AG04449 (cell line): ENCODE measurements at regions of chr1 and their contacts with region 1.

Region 1: DNA sequence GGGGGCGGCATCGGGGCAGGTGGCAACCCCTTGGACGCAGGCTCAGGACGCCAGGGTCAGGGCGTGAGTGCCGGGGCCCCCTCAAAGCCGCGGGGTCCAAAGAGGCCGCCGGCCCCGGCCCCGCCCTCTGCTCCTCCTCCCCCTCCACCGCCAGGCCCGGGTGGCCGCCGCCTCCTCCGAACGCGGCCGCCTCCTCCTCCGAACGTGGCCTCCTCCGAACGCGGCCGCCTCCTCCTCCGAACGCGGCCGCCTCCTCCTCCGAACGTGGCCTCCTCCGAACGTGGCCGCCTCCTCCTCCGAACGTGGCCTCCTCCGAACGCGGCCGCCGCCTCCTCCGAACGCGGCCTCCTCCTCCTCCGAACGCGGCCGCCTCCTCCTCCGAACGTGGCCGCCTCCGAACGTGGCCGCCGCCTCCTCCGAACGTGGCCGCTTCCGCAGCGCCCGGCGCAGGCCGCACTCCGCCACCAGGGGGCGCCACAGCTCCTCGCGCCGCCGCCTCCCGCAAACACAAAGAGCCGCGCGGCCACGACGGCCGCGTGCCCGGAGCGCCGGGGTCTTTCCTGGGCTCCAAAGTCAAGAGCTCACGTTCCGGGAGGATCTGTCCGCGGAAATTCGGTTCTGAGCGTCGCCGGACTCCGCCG is 19.3 kb upstream of the SAMD11 start:
- DNase-seq: no peak
- H3K4me3 ChIP-seq: peak overlapping the region; percentile 57
- CTCF ChIP-seq: peak; percentile 84

Region 2: GRCh38 chr1:818618-819291 is 85.7 kb before region 1 on chr1:
- CTCF ChIA-PET with region 1: no interaction called
- POLR2A ChIA-PET with region 1: no interaction called
- DNase-seq: no peak
- H3K4me3 ChIP-seq: no peak overlapping the region
- CTCF ChIP-seq: no peak

Region 3: GRCh38 chr1:890661-891060 is 13.8 kb before region 1 on chr1:
- CTCF ChIA-PET with region 1: interaction called, 25 read pairs
- POLR2A ChIA-PET with region 1: no interaction called
- DNase-seq: no peak
- H3K4me3 ChIP-seq: no peak overlapping the region
- CTCF ChIP-seq: no peak

Region 4: DNA sequence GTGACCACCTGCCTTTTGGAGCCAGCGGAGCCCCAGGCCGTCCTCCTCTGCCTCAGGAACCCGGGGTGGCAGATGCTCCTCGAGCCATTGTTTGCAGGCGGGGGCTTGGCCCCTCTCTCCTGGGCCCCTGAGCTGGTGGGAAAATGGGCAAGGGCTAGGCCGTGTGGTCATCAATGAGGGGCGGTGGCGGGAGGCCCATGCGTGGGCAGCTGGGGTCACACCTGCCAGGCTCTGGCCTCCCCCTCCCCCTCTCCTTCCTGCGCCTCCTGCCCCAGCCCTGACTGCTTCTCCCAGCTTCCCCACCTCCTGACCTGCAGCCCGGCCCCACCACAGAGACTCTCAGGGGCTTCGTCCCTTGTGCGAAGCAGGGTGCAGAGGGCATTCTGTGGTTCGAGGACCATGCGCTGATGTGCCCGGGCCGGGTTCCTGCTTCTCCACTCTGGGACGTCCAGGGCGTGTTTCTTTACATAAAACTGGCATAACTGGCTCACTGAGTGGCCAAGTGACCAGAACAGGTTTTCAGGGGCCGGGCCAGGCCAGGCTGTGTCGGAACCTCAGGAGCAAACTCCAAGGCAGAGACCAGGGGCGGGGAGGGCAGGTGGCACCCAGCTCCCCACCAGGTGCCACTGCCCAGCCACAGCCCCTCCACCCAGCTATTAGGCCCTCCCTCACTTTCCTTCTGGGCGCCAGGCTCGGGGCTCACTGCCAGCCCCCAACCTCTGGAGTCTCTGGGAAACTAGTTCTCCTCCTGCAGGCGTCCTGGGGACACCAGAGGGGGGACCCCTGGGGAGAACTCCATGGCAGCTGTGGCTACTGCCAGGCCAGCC is 28.6 kb after region 1 on chr1:
- CTCF ChIA-PET with region 1: interaction called, 67 read pairs
- POLR2A ChIA-PET with region 1: no interaction called
- DNase-seq: no peak
- H3K4me3 ChIP-seq: no peak overlapping the region
- CTCF ChIP-seq: no peak

Region 5: GRCh38 chr1:975896-976683 is 71.7 kb after region 1 on chr1:
- CTCF ChIA-PET with region 1: interaction called, 29 read pairs
- POLR2A ChIA-PET with region 1: no interaction called
- DNase-seq: no peak
- H3K4me3 ChIP-seq: peak overlapping the region; percentile 29
- CTCF ChIP-seq: peak; percentile 87

Region 6: GRCh38 chr1:999725-1000356 is 95.4 kb after region 1 on chr1 and contains the start of gene HES4:
- CTCF ChIA-PET with region 1: interaction called, 11 read pairs
- POLR2A ChIA-PET with region 1: no interaction called
- DNase-seq: peak; percentile 51
- H3K4me3 ChIP-seq: peak within 1 kb of the TSS; percentile 73
- CTCF ChIP-seq: no peak